Right ventricle myocardium superior (tissue), 1 donor: ENCODE measurements at regions of chr12 and their contacts with region 1.

Region 1: GRCh38 chr12:48618541-48618940 is 48.7 kb upstream of the LALBA start:
- DNase-seq: peak; percentile 60
- ATAC-seq: peak; percentile 84

Region 2: GRCh38 chr12:48183091-48183875 is 435.3 kb before region 1 on chr12 and contains the start of gene CCDC184:
- intact Hi-C with region 1: loop called (anchors 10 kb)
- DNase-seq: peak; percentile 81
- ATAC-seq: peak; percentile 89
- total RNA-seq, gene CCDC184: 0.97 TPM